ENCODE measurements at regions of chr5 and their contacts with region 1.

Region 1: DNA sequence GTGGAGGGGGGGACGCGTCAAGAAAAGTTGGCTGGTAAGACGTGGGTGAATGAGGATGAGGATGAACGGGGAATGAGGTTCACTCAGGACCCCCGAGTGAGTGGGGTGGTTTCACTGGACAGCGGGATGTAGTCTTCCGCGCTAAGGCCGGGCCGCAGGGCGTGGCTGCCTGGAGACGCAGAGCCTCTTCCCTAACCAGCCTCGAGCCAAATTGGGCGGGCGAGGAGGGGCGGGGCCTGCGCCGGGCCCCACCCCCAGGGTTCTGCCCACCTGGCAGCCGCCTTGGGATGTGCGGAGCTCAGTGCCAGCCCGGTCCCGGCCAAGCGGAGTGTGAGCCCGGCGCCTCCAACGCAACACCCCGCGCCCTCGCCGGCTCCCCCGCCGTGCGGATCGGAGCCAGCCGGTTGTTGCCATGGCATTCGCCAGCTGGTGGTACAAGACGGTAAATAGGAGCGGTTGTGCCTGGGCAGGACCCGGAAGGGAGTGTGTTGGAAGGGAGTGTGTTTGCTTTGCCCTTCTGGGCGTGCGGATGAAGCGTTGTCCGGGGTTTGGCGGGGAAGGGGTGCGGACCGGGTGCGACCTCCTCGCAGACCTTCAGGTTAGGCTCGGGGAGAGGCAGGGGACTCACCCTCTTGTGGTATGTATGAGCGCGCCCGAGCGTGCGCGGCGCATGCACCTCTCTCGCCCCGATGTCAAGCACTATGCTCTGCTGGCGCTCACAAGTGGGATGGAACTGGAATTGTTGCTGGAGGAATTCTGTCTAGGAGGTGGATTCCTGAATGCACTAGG is 743 bp downstream of the CAST start:
- DNase-seq: peak; percentile 64 to 87 (median 76)
- ATAC-seq: peak; percentile 75 to 81 (median 76)
- H3K4me3 ChIP-seq: peak overlapping the region; percentile 92 to 93
- H3K4me3 Mint-ChIP-seq: peak overlapping the region; percentile 94 to 98 (median 97)
- H3K27ac ChIP-seq: peak overlapping the region; percentile 95
- H3K27ac Mint-ChIP-seq: peak overlapping the region; percentile 95 to 97
- H3K4me1 ChIP-seq: peaks cover 13 to 20% of the 10 kb centered on the region in 2 experiments
- H3K4me1 Mint-ChIP-seq: peaks cover 46 to 66% (median 57%) of the 10 kb centered on the region in 3 donors
- H3K27me3 ChIP-seq: peaks cover 0 to 2% of the 10 kb centered on the region in 2 experiments
- H3K27me3 Mint-ChIP-seq: no peaks in the 10 kb centered on the region

Region 2: DNA sequence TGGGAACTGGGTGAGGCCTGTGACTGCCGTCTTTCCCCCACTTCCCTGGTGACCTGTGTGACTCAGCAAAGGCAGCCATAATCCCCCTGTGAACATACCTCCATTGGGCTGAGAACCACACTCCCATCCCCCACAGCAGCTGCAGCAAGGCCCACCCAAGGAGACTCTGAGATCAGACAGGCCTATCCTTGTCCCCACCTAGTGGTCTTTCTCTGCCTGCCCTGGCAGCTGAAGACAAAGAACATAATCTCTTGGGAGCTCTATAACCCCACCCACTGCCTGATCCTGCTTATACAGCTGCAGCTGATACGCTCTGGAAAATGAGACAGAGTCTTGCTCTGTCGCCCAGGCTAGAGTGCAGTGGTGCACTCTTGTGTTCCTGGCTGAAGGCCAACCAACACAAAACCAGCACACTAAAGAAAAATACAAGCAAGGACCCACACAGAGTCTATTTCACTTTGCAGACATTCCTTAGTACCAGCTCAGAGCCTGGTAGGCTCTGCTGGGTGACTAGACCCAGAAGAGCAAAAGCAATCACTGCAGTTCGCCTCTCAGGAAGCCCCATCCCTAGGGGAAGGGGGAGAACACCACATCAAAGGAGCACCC is 1484.8 kb before region 1 on chr5:
- CTCF ChIA-PET with region 1: no interaction called
- POLR2A ChIA-PET with region 1: no interaction called
- DNase-seq: no peak
- ATAC-seq: no peak
- H3K4me3 ChIP-seq: no peak overlapping the region
- H3K4me3 Mint-ChIP-seq: no peak overlapping the region
- H3K27ac ChIP-seq: no peak overlapping the region
- H3K27ac Mint-ChIP-seq: no peak overlapping the region
- H3K4me1 ChIP-seq: no peaks in the 10 kb centered on the region
- H3K4me1 Mint-ChIP-seq: no peaks in the 10 kb centered on the region
- H3K27me3 ChIP-seq: no peaks in the 10 kb centered on the region
- H3K27me3 Mint-ChIP-seq: peaks cover 0 to 6% of the 10 kb centered on the region in 2 donors

Region 3: DNA sequence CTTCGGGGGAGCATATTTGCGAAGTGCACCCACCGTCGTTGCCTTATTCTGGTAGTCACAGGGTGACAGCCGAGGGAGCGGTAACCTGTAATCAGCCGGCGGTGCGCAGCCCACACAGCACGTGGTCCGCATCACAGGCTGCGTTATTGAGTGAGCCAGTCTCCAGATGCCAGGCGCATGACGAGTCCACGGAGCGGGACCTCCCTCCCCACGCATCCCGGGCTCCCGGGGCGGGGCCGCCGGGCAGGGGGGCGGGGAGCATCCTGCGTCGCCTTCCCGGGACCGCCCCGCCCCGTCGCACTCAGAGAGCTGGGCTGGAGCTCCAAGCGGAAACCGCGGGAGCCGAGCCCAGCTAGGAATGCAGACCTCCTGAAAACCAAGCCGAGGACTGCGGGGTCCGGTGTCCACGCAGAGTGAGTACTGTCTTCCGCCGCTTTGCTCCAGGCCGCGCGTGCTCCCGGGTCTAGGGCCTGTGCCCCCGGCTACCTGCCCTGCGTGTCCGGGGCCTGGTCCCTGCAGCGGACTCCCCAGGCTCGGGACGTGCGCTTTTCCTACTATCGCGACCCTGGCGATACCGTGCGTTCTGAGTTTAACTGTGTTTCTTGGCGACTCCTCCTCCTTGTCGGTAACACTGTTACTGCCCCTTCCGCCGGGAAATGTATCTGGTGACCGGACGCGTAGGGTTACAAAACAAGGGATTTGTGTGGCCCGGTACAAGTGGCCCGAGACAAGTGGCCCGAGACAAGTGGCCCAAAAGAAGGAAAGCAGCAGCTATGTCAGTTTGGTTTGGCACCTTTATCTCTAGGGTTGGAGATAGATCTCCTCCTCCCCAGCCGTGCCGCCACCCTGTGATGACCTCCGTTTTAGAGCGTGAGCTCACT is 39.8 kb after region 1 on chr5:
- CTCF ChIA-PET with region 1: interaction called, 3 to 5 read pairs
- POLR2A ChIA-PET with region 1: interaction called, 5 to 39 read pairs
- DNase-seq: peak; percentile 36 to 85 (median 79)
- ATAC-seq: peak; percentile 75 to 89 (median 82)
- H3K4me3 ChIP-seq: peak overlapping the region; percentile 74
- H3K4me3 Mint-ChIP-seq: peak overlapping the region; percentile 86 to 95 (median 91)
- H3K27ac ChIP-seq: peak overlapping the region; percentile 88
- H3K27ac Mint-ChIP-seq: peak overlapping the region; percentile 81 to 89
- H3K4me1 ChIP-seq: peaks cover 3 to 14% of the 10 kb centered on the region in 2 experiments
- H3K4me1 Mint-ChIP-seq: peaks cover 30 to 66% (median 53%) of the 10 kb centered on the region in 3 donors
- H3K27me3 ChIP-seq: no peaks in the 10 kb centered on the region
- H3K27me3 Mint-ChIP-seq: no peaks in the 10 kb centered on the region

Region 4: GRCh38 chr5:96714951-96715451 is 52.1 kb after region 1 on chr5:
- CTCF ChIA-PET with region 1: interaction called in 1 of 2 experiments, 6 read pairs
- POLR2A ChIA-PET with region 1: interaction called in 1 of 2 experiments, 13 read pairs
- DNase-seq: peak in 31 of 35 experiments; percentile 15 to 76 (median 39)
- ATAC-seq: peak; percentile 57 to 77 (median 68)
- H3K4me3 ChIP-seq: no peak overlapping the region
- H3K4me3 Mint-ChIP-seq: no peak overlapping the region
- H3K27ac ChIP-seq: peak overlapping the region; percentile 64
- H3K27ac Mint-ChIP-seq: peak overlapping the region; percentile 71 to 79
- H3K4me1 ChIP-seq: peaks cover 9% of the 10 kb centered on the region in 2 experiments
- H3K4me1 Mint-ChIP-seq: peaks cover 65 to 83% (median 78%) of the 10 kb centered on the region in 3 donors
- H3K27me3 ChIP-seq: no peaks in the 10 kb centered on the region
- H3K27me3 Mint-ChIP-seq: no peaks in the 10 kb centered on the region

Measured in T-cell (primary cell).